ENCODE measurements at regions of chr20 and their contacts with region 1.

Region 1: DNA sequence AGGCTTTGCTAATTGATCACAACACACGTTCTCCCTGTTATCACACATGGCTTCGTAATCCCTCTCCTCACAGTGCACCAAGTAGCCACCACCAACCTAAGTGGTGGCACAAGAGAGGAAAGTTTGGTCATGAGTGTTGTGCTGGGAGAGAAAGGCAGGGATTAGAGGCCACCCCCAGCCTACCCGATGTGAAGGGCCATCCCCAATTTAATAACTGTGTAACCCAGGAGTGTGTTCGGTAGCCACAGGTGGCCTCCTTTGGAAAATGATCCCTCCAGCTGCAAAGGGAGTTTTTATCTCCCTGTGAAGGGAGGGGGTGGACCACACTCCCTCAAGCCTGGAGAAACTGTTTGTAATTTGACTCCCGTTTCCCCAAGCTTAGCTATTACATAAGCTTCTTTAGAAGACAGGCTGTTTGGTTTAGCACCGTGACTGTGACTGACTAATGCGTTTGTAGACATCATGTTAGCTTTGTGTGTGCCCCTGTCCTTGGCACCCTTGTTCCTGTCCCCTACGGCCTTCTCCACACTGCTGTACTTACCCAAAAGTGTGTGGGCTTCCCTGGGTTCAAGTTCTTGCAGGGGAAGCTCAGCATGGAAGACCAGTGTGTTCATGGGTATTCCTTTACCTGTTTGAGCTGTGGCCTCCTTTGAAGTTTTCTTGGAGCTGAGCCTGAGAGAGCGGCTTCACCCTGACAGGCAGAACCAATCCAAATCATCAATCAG is 20.6 kb downstream of the PPP1R16B start:
- DNase-seq: no peak
- ATAC-seq: no peak
- H3K4me3 Mint-ChIP-seq: no peak overlapping the region
- H3K27ac Mint-ChIP-seq: peak overlapping the region; percentile 61
- H3K4me1 Mint-ChIP-seq: peaks cover 89% of the 10 kb centered on the region
- H3K27me3 Mint-ChIP-seq: no peaks in the 10 kb centered on the region
- CTCF ChIP-seq: no peak

Region 2: GRCh38 chr20:38633577-38634093 is 192.4 kb before region 1 on chr20:
- CTCF ChIA-PET with region 1: no interaction called
- POLR2A ChIA-PET with region 1: no interaction called
- intact Hi-C with region 1: no loop called
- DNase-seq: peak; percentile 31
- ATAC-seq: peak; percentile 96
- H3K4me3 Mint-ChIP-seq: no peak overlapping the region
- H3K27ac Mint-ChIP-seq: no peak overlapping the region
- H3K4me1 Mint-ChIP-seq: peaks cover 3% of the 10 kb centered on the region
- H3K27me3 Mint-ChIP-seq: peaks cover 13% of the 10 kb centered on the region
- CTCF ChIP-seq: peak; percentile 69

Region 3: DNA sequence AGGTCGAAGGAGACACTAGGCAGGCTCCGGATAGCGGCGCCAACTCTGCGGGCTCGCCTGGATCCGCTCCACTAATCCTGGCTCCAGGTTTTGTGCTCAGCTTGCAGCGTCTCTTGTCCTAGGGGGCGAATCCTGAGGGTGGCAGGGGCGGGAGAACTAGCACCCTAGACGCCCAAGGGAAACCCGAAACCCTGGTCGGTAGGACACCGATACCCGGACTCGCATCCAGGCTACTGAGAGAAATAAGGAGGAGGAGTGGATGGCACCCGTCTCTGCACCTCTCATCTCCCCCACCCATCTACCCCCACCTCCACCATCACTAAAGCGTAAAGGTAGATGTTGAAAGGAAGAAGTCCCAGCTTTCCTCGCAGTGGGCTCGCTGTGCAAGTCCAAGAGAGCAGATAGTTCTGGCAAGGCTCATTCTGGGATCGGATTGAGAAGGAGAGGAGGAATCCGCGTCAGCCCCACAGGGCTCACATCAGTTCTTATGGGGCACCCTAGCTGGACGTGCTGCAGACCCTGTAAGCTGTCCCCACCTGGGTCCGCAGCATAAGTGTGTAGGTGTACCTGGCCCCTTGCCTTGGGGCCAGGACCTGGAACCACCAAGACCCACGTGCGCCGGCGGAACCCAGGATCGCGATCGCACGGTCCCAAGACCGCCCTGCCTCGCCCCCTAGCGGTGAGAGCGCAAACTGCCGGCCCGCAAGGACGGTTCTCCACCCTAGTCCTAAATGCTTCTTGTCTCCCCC is 94.9 kb before region 1 on chr20:
- CTCF ChIA-PET with region 1: no interaction called
- POLR2A ChIA-PET with region 1: no interaction called
- intact Hi-C with region 1: no loop called
- DNase-seq: peak; percentile 68
- ATAC-seq: peak; percentile 76
- H3K4me3 Mint-ChIP-seq: peak overlapping the region; percentile 65
- H3K27ac Mint-ChIP-seq: no peak overlapping the region
- H3K4me1 Mint-ChIP-seq: peaks cover 52% of the 10 kb centered on the region
- H3K27me3 Mint-ChIP-seq: peaks cover 88% of the 10 kb centered on the region
- CTCF ChIP-seq: peak; percentile 77

Region 4: GRCh38 chr20:38812182-38812581 is 13.9 kb before region 1 on chr20:
- CTCF ChIA-PET with region 1: interaction called, 3 read pairs
- POLR2A ChIA-PET with region 1: interaction called, 6 read pairs
- intact Hi-C with region 1: loop called (anchors 2 kb)
- DNase-seq: no peak
- ATAC-seq: peak; percentile 42
- H3K4me3 Mint-ChIP-seq: peak overlapping the region; percentile 49
- H3K27ac Mint-ChIP-seq: peak overlapping the region; percentile 79
- H3K4me1 Mint-ChIP-seq: peaks cover 98% of the 10 kb centered on the region
- H3K27me3 Mint-ChIP-seq: no peaks in the 10 kb centered on the region
- CTCF ChIP-seq: no peak

Measured in activated B cell treated with CpG ODN at 0.5 μM for 24 hours (primary cell).